ENCODE measurements at regions of chr1 and their contacts with region 1.

Region 1: DNA sequence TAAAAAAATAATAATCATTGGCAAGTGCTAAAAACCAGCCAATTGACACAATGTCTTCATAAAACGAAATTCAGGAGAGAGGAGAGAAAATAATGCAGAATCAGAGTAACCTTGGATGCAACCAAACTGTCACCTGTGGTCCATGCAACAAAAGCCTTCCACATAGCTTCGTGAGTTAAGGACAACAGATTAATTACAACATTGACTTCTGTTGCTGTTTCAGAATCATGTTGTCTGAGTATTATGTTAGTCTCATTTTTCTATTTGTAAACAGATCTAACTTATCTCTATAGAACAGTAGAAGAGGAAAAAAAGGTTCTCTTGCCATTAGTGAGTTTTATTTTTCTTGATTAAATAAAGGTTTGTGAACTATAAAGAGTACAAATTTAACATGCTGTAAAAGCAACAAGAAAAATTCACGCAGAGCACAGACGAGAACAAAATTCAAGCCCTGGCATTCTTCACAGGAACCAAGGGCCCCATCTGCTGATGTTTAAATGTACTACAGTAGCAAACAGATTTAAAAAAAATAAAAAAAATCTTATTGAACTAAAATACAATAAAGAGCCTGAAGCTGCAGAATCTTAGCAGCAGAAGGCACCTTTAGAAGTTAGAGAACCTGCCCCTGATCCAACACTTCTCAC is 381.1 kb upstream of the PKN2 start:
- DNase-seq: peak in 1 of 2 donors; percentile 9
- ATAC-seq: no peak
- H3K4me3 ChIP-seq: no peak overlapping the region
- H3K27ac ChIP-seq: no peak overlapping the region
- H3K4me1 ChIP-seq: peaks cover 0 to 7% (median 0%) of the 10 kb centered on the region in 9 donors
- H3K27me3 ChIP-seq: no peaks in the 10 kb centered on the region
- CTCF ChIP-seq: peak in 7 of 9 donors; percentile 41 to 64 (median 53)

Region 2: DNA sequence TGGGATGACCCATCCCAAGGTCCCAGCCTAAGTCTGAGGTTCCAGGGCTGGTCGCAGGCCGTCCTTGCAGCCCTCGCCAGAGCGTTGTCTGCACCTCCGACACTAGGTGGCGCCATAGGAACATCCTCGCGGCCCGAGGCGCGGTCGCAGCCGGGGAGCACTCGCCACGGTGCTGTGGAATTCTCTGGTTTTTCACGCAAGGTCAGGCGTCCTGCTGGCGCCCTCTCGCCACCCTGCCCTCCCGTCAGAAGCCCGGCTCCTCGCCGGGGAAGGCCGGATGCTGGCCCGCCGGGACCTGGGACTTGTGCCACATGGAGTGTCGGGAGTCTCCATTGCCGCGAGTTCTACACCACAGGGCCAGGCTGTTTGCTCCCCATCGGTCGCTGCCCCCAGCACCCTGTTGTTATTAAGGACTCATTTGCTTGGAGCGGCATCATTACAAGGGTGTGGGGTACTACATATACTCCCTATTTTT is 1171.1 kb before region 1 on chr1:
- intact Hi-C with region 1: loop called in 1 of 10 experiments (anchors 5 kb)
- DNase-seq: peak; percentile 81 to 84
- ATAC-seq: peak; percentile 87 to 95 (median 91)
- H3K4me3 ChIP-seq: peak overlapping the region; percentile 21 to 63 (median 50)
- H3K27ac ChIP-seq: peak overlapping the region; percentile 5 to 85 (median 68)
- H3K4me1 ChIP-seq: peaks cover 0 to 52% (median 22%) of the 10 kb centered on the region in 9 donors
- H3K27me3 ChIP-seq: peaks cover 0 to 9% (median 0%) of the 10 kb centered on the region in 7 donors
- CTCF ChIP-seq: peak; percentile 85 to 97 (median 93)

Region 3: DNA sequence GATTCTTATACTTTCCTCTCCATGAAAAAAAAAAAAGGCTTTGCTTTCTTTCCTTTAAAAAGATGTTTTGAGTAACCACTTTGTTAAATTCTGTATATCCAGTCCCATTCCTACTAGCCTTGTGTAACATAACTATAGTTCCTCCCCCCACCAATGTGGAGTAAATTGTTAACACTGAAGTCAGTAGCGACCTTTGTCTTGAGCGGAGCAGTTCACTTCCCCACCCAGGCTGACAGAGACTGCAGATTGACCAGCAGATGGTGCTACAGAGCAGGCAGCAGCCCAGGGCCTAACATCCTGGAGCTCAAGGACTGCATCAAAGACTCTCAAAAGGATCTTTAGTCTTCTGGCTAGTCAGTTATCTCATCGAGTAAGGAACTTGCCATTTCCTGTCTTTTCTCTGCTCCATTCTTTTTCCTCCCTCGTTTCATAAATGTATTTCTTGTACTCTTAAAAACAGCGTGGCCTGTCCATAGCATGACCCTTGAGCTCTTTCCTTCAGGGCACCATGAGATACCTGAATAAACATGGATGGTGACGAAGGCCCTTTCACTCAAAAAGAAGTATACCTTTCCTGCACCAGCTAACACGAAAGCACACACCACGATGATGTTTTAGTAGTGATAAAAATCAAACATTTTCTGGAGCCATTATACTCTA is 122.4 kb before region 1 on chr1:
- intact Hi-C with region 1: loop called in 6 of 10 experiments (anchors 5 to 10 kb)
- DNase-seq: peak; percentile 52 to 55
- ATAC-seq: peak; percentile 80 to 94 (median 90)
- H3K4me3 ChIP-seq: no peak overlapping the region
- H3K27ac ChIP-seq: no peak overlapping the region
- H3K4me1 ChIP-seq: no peaks in the 10 kb centered on the region
- H3K27me3 ChIP-seq: peaks cover 0 to 3% (median 0%) of the 10 kb centered on the region in 7 donors
- CTCF ChIP-seq: peak; percentile 72 to 95 (median 92)

Region 4: DNA sequence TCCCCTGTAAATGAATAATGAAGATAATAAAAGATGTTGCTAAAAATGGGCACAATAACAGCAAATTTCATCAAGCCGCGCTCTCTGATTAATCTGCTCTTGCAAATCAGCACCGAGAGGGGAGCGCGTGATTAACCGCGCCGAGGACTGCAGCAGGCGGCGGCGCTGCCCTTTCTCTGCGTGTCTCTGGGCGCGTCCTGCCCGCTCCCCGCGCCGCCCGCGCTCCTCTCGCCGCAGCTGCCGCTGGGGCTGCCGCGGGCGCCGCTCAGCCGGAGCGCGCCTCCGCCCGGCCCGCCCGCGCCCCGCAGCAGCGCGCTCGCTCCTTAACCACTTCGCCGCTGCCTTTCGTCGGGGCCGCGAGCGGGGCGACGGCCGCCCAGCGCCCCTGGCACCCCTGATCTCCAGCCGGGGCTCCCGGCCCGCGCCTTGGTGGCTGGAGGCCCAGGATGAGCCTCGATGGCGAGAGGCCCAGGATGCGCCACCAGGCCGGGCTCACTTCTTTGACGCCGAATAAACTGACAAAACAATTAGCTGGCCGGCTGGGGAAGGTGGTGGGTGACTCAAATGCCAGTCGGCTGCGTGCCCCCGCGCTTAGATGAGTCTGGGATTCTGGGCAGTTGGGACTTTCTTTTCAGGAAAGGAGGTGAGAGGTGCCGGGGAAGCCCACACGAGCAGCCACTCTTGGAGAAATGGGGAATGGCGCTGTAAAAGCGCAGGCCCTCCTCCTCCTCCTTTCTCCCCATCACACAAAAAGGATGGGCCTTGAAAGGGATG is 159.7 kb after region 1 on chr1:
- intact Hi-C with region 1: loop called in 1 of 10 experiments (anchors 10 kb)
- DNase-seq: peak in 1 of 2 donors; percentile 34
- ATAC-seq: peak; percentile 38 to 94 (median 76)
- H3K4me3 ChIP-seq: peak overlapping the region in 9 of 10 donors; percentile 26 to 54 (median 47)
- H3K27ac ChIP-seq: peak overlapping the region in 9 of 10 donors; percentile 22 to 78 (median 69)
- H3K4me1 ChIP-seq: peaks cover 0 to 6% (median 0%) of the 10 kb centered on the region in 9 donors
- H3K27me3 ChIP-seq: peaks cover 0 to 36% (median 0%) of the 10 kb centered on the region in 7 donors
- CTCF ChIP-seq: peak in 2 of 9 donors; percentile 6

Region 5: DNA sequence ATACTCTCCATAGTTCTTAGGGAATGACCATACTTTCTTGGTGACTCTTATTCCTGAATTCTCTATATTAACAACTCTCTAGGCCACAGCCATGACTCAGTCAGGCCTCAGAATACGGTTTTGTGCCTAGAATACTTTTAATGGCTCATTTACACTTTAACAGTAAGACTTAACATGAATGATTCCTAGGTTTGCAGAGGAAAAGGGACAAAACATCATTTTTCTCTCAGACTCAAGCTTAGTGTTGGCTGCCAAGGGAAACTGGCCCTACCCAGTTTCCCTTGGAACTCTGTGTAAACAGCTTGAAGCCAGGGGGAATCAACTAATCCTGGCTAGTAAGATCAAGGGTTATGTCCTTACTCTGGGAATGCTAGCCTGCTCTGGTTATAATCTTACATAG is 216.2 kb after region 1 on chr1:
- intact Hi-C with region 1: loop called in 1 of 10 experiments (anchors 5 kb)
- DNase-seq: no peak
- ATAC-seq: peak in 5 of 8 donors; percentile 37 to 82 (median 75)
- H3K4me3 ChIP-seq: no peak overlapping the region
- H3K27ac ChIP-seq: peak overlapping the region in 5 of 10 donors; percentile 17 to 46 (median 20)
- H3K4me1 ChIP-seq: peaks cover 0 to 4% (median 0%) of the 10 kb centered on the region in 9 donors
- H3K27me3 ChIP-seq: no peaks in the 10 kb centered on the region
- CTCF ChIP-seq: no peak

Measured in heart right ventricle (tissue), 16 donors.